ENCODE measurements at regions of chrX and their contacts with region 1.

Region 1: DNA sequence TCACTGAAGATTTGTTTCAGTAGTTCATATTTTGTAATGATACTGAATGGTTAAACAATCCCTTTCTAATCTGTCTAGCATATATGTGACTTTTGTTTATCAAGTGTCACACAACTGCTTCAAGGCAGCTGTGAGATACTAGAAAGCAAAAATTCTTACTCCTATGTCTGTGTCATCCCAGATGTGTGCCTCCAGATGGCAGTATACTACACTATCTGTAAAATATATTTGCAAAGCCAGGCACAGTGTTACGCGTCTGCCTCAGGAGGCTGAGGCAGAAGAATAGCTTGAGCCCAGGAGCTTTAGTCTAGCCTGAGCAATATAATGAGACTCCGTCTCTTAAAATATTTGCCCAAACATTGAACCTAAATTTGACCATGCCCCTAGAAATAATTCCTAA is 4.0 kb downstream of the NUDT10 start:
- DNase-seq: no peak
- H3K4me3 ChIP-seq: no peak overlapping the region
- H3K27ac ChIP-seq: no peak overlapping the region
- H3K27me3 ChIP-seq: no peaks in the 10 kb centered on the region
- CTCF ChIP-seq: peak; percentile 57

Region 2: GRCh38 chrX:51420610-51421009 is 84.0 kb after region 1 on chrX:
- CTCF ChIA-PET with region 1: interaction called, 33 read pairs
- POLR2A ChIA-PET with region 1: no interaction called
- DNase-seq: peak; percentile 1
- H3K4me3 ChIP-seq: no peak overlapping the region
- H3K27ac ChIP-seq: no peak overlapping the region
- H3K27me3 ChIP-seq: no peaks in the 10 kb centered on the region
- CTCF ChIP-seq: peak; percentile 62

Region 3: DNA sequence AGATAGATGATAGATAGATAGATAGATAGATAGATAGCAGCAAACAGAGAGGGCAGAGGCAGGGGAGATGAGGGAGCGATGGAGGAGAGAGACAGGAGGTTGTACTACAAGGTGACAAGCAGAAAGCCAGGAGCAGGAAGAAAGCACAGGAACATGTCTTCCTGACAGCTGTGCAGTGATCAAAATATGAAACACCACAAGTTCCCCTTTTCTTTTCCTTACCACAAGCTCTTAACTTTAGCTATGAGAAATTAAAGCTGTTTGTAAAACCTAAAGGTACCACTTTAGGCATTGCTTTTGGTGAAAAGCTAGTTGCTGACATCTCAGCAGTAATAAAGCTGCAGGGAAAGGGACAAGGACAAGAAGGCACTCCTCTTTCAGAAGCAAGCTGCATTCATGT is 741.5 kb after region 1 on chrX:
- CTCF ChIA-PET with region 1: no interaction called
- POLR2A ChIA-PET with region 1: no interaction called
- DNase-seq: no peak
- H3K4me3 ChIP-seq: no peak overlapping the region
- H3K27ac ChIP-seq: no peak overlapping the region
- H3K27me3 ChIP-seq: peaks cover 3% of the 10 kb centered on the region
- CTCF ChIP-seq: no peak